SK-N-SH (cell line): ENCODE measurements at regions of chr7 and their contacts with region 1.

Region 1: GRCh38 chr7:85041605-85042216 is 145.1 kb downstream of the SEMA3D start:
- DNase-seq: peak; percentile 38
- H3K4me3 ChIP-seq: no peak overlapping the region; a peak in 1 of 4 replicates
- H3K27ac ChIP-seq: no peak overlapping the region
- H3K4me1 ChIP-seq: no peaks in the 10 kb centered on the region; a peak in 1 of 4 replicates
- H3K27me3 ChIP-seq: no peaks in the 10 kb centered on the region
- CTCF ChIP-seq: peak; percentile 99
- EP300 ChIP-seq: no peak
- RAD21 ChIP-seq: peak; percentile 99

Region 2: GRCh38 chr7:83936056-83936708 is 1105.5 kb before region 1 on chr7:
- CTCF ChIA-PET with region 1: interaction called, 10 read pairs
- POLR2A ChIA-PET with region 1: no interaction called
- DNase-seq: peak; percentile 57
- H3K4me3 ChIP-seq: no peak overlapping the region
- H3K27ac ChIP-seq: no peak overlapping the region
- H3K4me1 ChIP-seq: no peaks in the 10 kb centered on the region
- H3K27me3 ChIP-seq: no peaks in the 10 kb centered on the region
- CTCF ChIP-seq: peak; percentile 100
- EP300 ChIP-seq: no peak
- RAD21 ChIP-seq: peak; percentile 99

Region 3: DNA sequence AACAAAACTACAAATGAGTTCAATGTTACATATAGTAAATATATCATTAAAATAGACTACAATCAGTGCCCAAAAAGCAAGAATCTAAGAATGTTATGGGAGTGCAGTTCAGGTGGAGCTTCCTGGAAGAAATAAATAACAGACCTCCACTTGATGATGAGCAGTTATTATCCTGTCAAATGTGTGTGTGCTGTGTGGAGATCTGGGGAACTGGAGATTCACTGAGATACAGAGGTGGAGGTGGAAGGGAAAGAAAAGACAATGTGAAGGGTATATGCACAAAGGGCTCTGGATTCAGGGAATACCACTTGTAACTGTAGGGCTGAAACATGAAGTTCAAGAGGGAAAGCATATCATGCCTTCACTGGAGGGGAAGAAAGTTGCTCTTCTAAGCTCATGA is 186.0 kb before region 1 on chr7:
- CTCF ChIA-PET with region 1: no interaction called
- POLR2A ChIA-PET with region 1: no interaction called
- DNase-seq: no peak
- H3K4me3 ChIP-seq: no peak overlapping the region
- H3K27ac ChIP-seq: no peak overlapping the region
- H3K4me1 ChIP-seq: peaks cover 0 to 2% of the 10 kb centered on the region in 2 experiments; a peak in 1 of 4 replicates
- H3K27me3 ChIP-seq: no peaks in the 10 kb centered on the region
- CTCF ChIP-seq: no peak
- EP300 ChIP-seq: no peak
- RAD21 ChIP-seq: no peak

Region 4: DNA sequence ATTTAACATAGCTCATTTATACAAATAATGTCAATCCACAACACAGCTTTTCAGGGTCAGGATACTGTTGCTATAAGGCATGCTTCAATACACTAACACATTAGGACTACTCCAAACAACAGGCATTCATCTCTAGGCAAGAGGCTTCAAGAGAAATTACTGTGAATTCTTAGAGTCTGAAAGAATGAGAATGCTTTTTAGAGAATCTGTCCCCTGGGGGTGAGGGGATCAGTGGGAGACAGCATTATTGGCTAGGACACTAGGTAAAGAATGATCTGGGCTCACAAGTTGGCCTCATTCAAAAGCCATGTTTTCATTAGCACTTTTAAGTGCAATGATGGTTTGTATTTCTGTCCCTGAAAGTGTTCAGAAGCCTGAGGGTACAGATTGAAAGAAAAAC is 12.6 kb after region 1 on chr7:
- CTCF ChIA-PET with region 1: interaction called, 32 read pairs
- POLR2A ChIA-PET with region 1: no interaction called
- DNase-seq: no peak
- H3K4me3 ChIP-seq: no peak overlapping the region
- H3K27ac ChIP-seq: no peak overlapping the region
- H3K4me1 ChIP-seq: no peaks in the 10 kb centered on the region
- H3K27me3 ChIP-seq: no peaks in the 10 kb centered on the region
- CTCF ChIP-seq: no peak
- EP300 ChIP-seq: no peak
- RAD21 ChIP-seq: no peak

Region 5: DNA sequence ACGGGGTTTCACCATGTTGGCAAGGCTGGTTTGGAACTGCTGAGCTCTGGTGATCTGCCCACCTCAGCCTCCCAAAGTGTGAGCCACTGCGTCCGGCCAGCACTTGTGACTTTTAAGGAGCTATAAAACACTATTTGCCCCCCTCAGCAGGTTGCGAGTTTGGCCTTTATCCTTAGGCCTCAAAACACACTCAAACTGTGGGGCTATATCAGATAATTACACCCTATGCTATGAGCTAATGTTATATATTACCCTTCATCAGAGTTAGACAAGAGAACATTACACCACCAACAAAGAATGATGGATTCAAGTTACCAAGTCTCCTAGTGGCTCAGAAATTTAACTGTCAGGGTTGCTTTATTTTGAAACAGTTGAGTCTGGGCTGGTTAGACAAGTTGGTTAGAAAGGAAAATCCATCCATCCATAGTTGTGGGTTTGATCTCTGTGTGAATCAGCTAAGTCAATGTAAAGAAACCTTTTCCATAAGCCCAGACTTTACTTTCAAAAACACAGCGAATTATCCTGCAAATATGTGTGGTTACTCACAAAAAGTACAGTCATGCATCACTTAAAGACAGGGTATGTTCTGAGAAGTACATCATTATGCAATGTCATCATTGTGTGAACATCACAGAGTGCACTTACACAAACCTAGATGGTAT is 29.4 kb after region 1 on chr7:
- CTCF ChIA-PET with region 1: interaction called, 25 read pairs
- POLR2A ChIA-PET with region 1: no interaction called
- DNase-seq: no peak
- H3K4me3 ChIP-seq: no peak overlapping the region
- H3K27ac ChIP-seq: peak overlapping the region in 1 of 2 experiments; percentile 43; a peak in 2 of 4 replicates
- H3K4me1 ChIP-seq: peaks cover 0 to 27% of the 10 kb centered on the region in 2 experiments; a peak in 1 of 4 replicates
- H3K27me3 ChIP-seq: no peaks in the 10 kb centered on the region
- CTCF ChIP-seq: no peak
- EP300 ChIP-seq: no peak; a peak in 1 of 4 replicates
- RAD21 ChIP-seq: no peak

Region 6: DNA sequence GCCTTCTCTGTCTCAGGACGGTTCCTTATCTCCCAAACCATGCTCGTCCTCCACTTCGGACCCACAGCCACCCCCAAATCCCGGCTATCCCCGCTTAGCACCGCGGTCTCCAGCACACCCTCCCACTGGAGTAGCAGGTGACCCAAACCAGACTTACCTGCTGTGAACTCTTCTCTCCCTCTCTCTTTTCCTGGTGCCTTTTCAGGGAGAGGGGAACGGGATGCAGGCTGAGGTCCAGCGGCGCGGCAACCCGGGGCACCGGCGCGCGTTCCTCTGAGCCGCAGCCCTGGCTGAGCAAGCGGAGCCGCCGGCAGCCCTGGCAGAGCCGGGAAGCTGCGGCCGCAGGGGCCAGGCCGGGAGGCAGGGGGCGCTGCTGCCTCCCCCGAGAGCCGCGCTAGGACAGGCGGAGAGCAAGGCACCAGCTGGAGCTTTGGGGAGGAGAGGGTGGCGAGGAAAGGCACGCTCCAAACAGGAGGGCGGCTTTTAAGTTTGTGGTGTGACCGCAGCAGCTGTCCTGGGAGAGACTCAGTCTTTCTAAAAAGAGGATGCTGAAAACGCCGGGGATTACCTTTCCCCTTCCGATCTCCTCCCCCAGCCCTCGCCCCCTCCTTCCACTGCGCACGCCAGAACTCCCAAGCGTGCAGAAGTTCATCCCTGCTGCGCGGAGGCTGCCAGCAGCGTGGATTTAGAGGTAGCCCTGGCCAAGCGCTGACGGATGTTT is 145.0 kb after region 1 on chr7 and contains the start of gene SEMA3D:
- CTCF ChIA-PET with region 1: interaction called, 134 read pairs
- POLR2A ChIA-PET with region 1: no interaction called
- DNase-seq: peak; percentile 93
- H3K4me3 ChIP-seq: peak within 1 kb of the TSS; percentile 90 to 97
- H3K27ac ChIP-seq: peak within 1 kb of the TSS; percentile 29 to 61; a peak in 3 of 4 replicates
- H3K4me1 ChIP-seq: peaks cover 4 to 26% of the 10 kb centered on the region in 2 experiments; a peak in 3 of 4 replicates
- H3K27me3 ChIP-seq: no peaks in the 10 kb centered on the region
- CTCF ChIP-seq: peak; percentile 98
- EP300 ChIP-seq: no peak; a peak in 1 of 4 replicates
- RAD21 ChIP-seq: peak; percentile 77
- polyA plus RNA-seq, gene SEMA3D: 30.1 and 48.7 TPM in 2 replicates

Region 7: GRCh38 chr7:85750454-85750949 is 708.8 kb after region 1 on chr7:
- CTCF ChIA-PET with region 1: interaction called, 61 read pairs
- POLR2A ChIA-PET with region 1: no interaction called
- DNase-seq: peak; percentile 49
- H3K4me3 ChIP-seq: no peak overlapping the region; a peak in 1 of 4 replicates
- H3K27ac ChIP-seq: no peak overlapping the region
- H3K4me1 ChIP-seq: no peaks in the 10 kb centered on the region
- H3K27me3 ChIP-seq: no peaks in the 10 kb centered on the region
- CTCF ChIP-seq: peak; percentile 81
- EP300 ChIP-seq: no peak
- RAD21 ChIP-seq: peak; percentile 88

Region 8: DNA sequence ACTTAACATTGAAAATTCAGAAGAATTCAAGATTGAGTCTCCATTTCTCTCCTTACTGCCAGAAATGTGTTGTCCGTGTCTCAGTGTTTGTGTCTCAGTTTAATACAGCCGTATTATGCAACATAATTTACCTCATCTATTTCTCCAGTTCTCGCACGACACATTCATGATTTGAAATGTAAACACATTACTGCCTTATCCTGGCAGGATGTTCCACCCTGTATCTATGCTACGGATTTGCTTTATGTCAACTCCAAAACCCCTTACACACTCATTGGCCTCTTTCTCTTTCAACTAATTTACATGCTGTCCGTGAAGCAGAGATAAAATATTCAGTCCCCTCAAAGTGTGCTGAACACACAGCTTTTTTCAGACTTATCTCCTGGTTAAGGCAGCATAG is 798.8 kb after region 1 on chr7:
- CTCF ChIA-PET with region 1: interaction called, 20 read pairs
- POLR2A ChIA-PET with region 1: no interaction called
- DNase-seq: no peak
- H3K4me3 ChIP-seq: no peak overlapping the region
- H3K27ac ChIP-seq: no peak overlapping the region
- H3K4me1 ChIP-seq: no peaks in the 10 kb centered on the region
- H3K27me3 ChIP-seq: no peaks in the 10 kb centered on the region
- CTCF ChIP-seq: no peak
- EP300 ChIP-seq: no peak
- RAD21 ChIP-seq: no peak